Naive thymus-derived CD4-positive, alpha-beta T cell (primary cell): ENCODE measurements at regions of chr1 and their contacts with region 1.

Region 1: GRCh38 chr1:203273206-203273868 is 32.0 kb upstream of the BTG2 start:
- DNase-seq: peak; percentile 84 to 95 (median 91)
- ATAC-seq: peak; percentile 82
- H3K4me3 ChIP-seq: peak overlapping the region; percentile 55
- H3K4me3 Mint-ChIP-seq: peak overlapping the region; percentile 76 to 83 (median 80)
- H3K27ac ChIP-seq: peak overlapping the region; percentile 75
- H3K27ac Mint-ChIP-seq: peak overlapping the region; percentile 83 to 98 (median 94)
- H3K4me1 ChIP-seq: peaks cover 11 to 64% of the 10 kb centered on the region in 2 donors
- H3K4me1 Mint-ChIP-seq: peaks cover 20 to 71% (median 65%) of the 10 kb centered on the region in 7 donors
- H3K27me3 ChIP-seq: no peaks in the 10 kb centered on the region
- H3K27me3 Mint-ChIP-seq: no peaks in the 10 kb centered on the region

Region 2: GRCh38 chr1:203239526-203240305 is 33.6 kb before region 1 on chr1:
- CTCF ChIA-PET with region 1: no interaction called
- POLR2A ChIA-PET with region 1: no interaction called
- intact Hi-C with region 1: no loop called
- DNase-seq: no peak
- ATAC-seq: no peak
- H3K4me3 ChIP-seq: no peak overlapping the region
- H3K4me3 Mint-ChIP-seq: no peak overlapping the region
- H3K27ac ChIP-seq: no peak overlapping the region
- H3K27ac Mint-ChIP-seq: no peak overlapping the region
- H3K4me1 ChIP-seq: no peaks in the 10 kb centered on the region
- H3K4me1 Mint-ChIP-seq: no peaks in the 10 kb centered on the region
- H3K27me3 ChIP-seq: no peaks in the 10 kb centered on the region
- H3K27me3 Mint-ChIP-seq: peaks cover 29 to 39% (median 33%) of the 10 kb centered on the region in 5 donors

Region 3: GRCh38 chr1:203290261-203291089 is 17.1 kb after region 1 on chr1:
- CTCF ChIA-PET with region 1: interaction called, 122 read pairs
- POLR2A ChIA-PET with region 1: interaction called, 389 read pairs
- intact Hi-C with region 1: loop called (anchors 1 kb)
- DNase-seq: peak; percentile 95 to 98 (median 97)
- ATAC-seq: peak; percentile 76
- H3K4me3 ChIP-seq: peak overlapping the region; percentile 57
- H3K4me3 Mint-ChIP-seq: peak overlapping the region; percentile 75 to 89 (median 86)
- H3K27ac ChIP-seq: peak overlapping the region; percentile 98
- H3K27ac Mint-ChIP-seq: peak overlapping the region; percentile 97 to 100 (median 99)
- H3K4me1 ChIP-seq: peaks cover 54 to 58% of the 10 kb centered on the region in 2 donors
- H3K4me1 Mint-ChIP-seq: peaks cover 44 to 92% (median 86%) of the 10 kb centered on the region in 7 donors
- H3K27me3 ChIP-seq: no peaks in the 10 kb centered on the region
- H3K27me3 Mint-ChIP-seq: peaks cover 0 to 3% (median 0%) of the 10 kb centered on the region in 5 donors

Region 4: GRCh38 chr1:203304919-203305808 is 31.8 kb after region 1 on chr1 and contains the start of gene BTG2:
- CTCF ChIA-PET with region 1: interaction called, 125 read pairs
- POLR2A ChIA-PET with region 1: interaction called, 1,812 read pairs
- intact Hi-C with region 1: loop called (anchors 1 kb)
- DNase-seq: peak; percentile 83 to 94 (median 89)
- ATAC-seq: peak; percentile 90
- H3K4me3 ChIP-seq: peak within 1 kb of the TSS; percentile 86
- H3K4me3 Mint-ChIP-seq: peak within 1 kb of the TSS; percentile 89 to 100 (median 96)
- H3K27ac ChIP-seq: peak within 1 kb of the TSS; percentile 100
- H3K27ac Mint-ChIP-seq: peak within 1 kb of the TSS; percentile 96 to 100 (median 99)
- H3K4me1 ChIP-seq: peaks cover 22 to 40% of the 10 kb centered on the region in 2 donors
- H3K4me1 Mint-ChIP-seq: peaks cover 54 to 65% (median 60%) of the 10 kb centered on the region in 7 donors
- H3K27me3 ChIP-seq: no peaks in the 10 kb centered on the region
- H3K27me3 Mint-ChIP-seq: no peaks in the 10 kb centered on the region
- total RNA-seq, gene BTG2: 141 to 654 (median 241) TPM

Region 5: DNA sequence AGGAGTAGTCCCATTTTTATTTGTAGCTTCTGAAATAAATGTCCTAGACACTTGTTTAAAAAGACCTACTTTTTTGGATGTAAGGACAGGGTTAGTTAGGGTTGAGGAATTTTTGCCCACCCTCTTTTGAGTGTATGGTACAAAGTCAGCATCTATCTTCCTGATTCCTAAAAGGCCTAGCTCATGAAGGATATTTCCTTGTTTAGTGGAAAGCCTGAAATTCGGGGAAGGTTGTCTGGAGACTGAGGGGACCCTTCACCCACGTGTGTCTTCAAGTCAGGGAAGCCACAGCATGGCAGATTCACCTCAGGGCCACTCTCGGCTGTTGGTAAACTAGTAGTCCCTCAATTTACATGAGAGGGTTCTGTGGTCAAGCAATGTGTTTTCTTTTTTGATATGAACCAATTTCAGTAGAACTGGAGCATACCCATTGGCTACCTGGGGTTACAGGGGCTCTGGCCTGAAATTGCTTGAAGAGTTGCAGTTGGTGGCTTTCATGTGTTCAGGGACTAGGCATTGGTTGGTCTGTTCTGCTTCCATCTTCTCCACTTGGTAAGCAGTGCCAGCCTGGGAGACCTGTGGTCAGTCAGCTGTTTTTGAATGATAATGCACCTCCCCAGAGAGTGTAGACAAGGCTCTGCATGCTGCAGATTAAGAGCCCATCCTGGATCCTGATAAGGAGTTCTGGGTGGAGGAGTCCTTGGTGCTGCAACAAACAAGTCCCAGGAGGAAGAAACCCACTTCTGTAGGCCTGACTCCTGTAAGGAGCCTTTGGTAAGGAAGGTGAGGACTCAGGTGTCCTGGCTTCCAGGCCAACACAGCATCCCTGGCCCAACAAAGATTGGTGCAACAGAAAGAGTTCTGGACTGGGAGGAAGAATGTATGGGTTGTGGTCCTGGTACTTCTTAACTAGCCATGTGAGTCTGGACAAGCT is 38.3 kb after region 1 on chr1:
- CTCF ChIA-PET with region 1: interaction called, 125 read pairs
- POLR2A ChIA-PET with region 1: interaction called, 1,812 read pairs
- intact Hi-C with region 1: no loop called
- DNase-seq: no peak
- ATAC-seq: no peak
- H3K4me3 ChIP-seq: no peak overlapping the region
- H3K4me3 Mint-ChIP-seq: peak overlapping the region; percentile 2 to 99 (median 68)
- H3K27ac ChIP-seq: peak overlapping the region; percentile 43
- H3K27ac Mint-ChIP-seq: peak overlapping the region; percentile 25 to 100 (median 97)
- H3K4me1 ChIP-seq: peaks cover 23 to 30% of the 10 kb centered on the region in 2 donors
- H3K4me1 Mint-ChIP-seq: peaks cover 48 to 69% (median 56%) of the 10 kb centered on the region in 7 donors
- H3K27me3 ChIP-seq: no peaks in the 10 kb centered on the region
- H3K27me3 Mint-ChIP-seq: no peaks in the 10 kb centered on the region

Region 6: DNA sequence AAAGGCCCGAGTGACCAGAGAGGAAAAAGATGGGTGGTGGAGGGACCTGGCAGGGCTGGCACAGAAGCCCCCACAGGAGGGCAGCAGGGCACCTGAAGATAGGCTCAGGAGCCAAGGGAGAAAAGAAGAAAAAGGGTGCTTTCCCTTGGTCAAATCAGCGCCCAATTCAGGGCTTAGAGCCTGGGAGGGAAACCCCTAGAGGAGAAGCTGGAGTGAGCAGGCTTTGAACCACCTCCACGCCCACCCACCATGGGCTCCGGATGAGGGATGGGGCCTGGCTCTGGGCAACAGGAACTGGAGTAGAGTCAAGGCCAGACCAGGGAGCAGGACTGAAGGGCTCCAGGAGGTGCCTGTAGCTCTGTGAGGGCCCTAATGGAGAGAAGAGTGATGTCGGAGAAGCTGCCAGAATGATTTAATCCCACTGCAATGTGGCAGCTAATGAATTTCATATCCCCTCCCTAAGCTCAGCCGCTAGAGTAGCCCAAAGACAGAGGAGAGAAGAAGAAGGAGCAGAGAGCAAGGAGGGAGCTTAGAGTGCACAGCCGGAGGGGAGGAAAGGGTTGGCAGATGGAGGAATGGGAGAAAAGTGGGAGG is 190.2 kb after region 1 on chr1:
- CTCF ChIA-PET with region 1: no interaction called
- POLR2A ChIA-PET with region 1: no interaction called
- intact Hi-C with region 1: no loop called
- DNase-seq: no peak
- ATAC-seq: no peak
- H3K4me3 ChIP-seq: no peak overlapping the region
- H3K4me3 Mint-ChIP-seq: no peak overlapping the region
- H3K27ac ChIP-seq: no peak overlapping the region
- H3K27ac Mint-ChIP-seq: no peak overlapping the region
- H3K4me1 ChIP-seq: no peaks in the 10 kb centered on the region
- H3K4me1 Mint-ChIP-seq: peaks cover 0 to 3% (median 0%) of the 10 kb centered on the region in 7 donors
- H3K27me3 ChIP-seq: no peaks in the 10 kb centered on the region
- H3K27me3 Mint-ChIP-seq: peaks cover 21 to 37% (median 27%) of the 10 kb centered on the region in 5 donors

Region 7: DNA sequence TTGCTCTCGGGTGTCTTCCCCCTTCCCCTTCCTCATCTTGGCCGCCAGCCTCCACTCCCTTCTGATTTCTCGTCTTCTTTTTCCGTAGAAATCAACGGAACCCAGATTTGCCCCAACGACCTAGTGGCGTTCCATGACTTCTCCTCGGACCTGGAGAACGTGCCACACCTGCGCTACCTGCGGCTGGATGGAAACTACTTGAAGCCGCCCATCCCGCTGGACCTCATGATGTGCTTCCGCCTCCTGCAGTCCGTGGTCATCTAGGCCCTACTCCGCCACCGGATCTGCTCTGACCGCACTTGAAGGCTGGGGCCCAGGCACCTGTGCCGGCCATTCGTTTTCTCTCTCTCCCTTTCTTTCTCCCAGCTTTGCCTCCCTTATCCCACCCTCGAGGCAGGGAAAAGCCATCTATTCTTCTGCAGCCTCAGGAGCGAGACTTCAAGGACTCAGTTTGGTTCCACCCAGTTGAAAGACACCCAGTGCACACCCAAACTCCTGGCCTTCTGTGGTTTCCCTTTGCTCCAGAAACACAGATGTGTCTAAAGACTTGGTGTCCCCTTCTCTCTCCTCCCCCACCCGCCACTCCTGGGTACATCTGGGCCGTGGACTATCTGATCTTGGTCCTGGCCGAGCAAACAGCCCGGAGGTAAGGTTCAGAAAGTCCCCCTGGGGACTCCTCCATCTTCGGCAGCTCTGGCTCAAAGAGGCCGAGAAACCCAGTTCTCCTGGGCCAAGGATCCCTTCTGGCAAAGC is 213.5 kb after region 1 on chr1:
- CTCF ChIA-PET with region 1: interaction called, 201 read pairs
- POLR2A ChIA-PET with region 1: interaction called, 16 read pairs
- intact Hi-C with region 1: loop called in 1 of 2 experiments (anchors 1 kb)
- DNase-seq: peak in 1 of 9 donors; percentile 5
- ATAC-seq: no peak
- H3K4me3 ChIP-seq: no peak overlapping the region
- H3K4me3 Mint-ChIP-seq: peak overlapping the region; percentile 58 to 84 (median 79)
- H3K27ac ChIP-seq: no peak overlapping the region
- H3K27ac Mint-ChIP-seq: peak overlapping the region; percentile 9 to 80 (median 72)
- H3K4me1 ChIP-seq: peaks cover 7 to 9% of the 10 kb centered on the region in 2 donors
- H3K4me1 Mint-ChIP-seq: peaks cover 0 to 20% (median 5%) of the 10 kb centered on the region in 7 donors
- H3K27me3 ChIP-seq: no peaks in the 10 kb centered on the region
- H3K27me3 Mint-ChIP-seq: peaks cover 0 to 5% (median 0%) of the 10 kb centered on the region in 5 donors